ENCODE measurements at regions of chr17 and their contacts with region 1.

Region 1: DNA sequence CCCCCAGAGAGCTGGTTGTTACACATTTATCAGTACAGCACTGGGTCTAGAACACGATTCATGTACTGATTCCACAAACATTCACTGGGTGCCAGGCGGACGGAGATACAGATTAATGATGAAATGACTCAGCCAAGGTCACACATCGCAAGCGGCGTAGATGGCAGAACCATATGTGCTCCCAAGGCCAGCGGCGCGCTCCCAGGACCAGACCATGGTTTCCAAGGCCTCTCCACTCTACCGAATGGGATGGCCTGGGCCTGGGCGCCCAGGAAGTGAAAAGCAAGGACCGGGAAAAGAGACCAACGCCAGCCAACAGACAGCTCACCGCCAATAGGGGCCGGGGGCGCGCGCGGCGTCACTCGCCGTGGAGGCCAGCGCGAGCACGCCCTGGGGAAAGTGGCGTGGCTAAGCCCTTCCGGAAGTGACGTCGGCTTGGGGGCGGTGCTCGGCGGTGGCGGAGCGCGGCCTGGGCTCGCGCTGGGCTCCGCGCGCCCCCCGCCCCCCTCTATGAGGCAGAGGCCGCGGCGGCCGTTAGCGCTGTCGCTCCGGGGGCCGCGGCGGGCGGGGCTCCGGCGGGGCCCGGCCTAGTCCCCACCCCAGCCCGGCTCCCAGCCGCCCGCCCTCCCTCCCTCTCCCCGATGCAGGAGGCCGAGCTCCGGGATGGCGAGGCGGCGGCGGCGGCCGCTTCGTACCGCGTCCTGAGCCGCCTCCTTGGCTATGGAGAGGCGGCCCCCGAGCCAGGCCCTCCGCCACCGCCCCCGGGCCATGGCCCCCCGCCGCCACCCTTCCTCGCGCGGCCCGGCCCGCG is at the start of gene SOCS7:
- DNase-seq: peak; percentile 89
- H3K4me3 ChIP-seq: peak within 1 kb of the TSS; percentile 66 to 69 (median 69)
- H3K27ac ChIP-seq: peak within 1 kb of the TSS; percentile 21
- H3K4me1 ChIP-seq: peaks cover 8% of the 10 kb centered on the region
- H3K27me3 ChIP-seq: no peaks in the 10 kb centered on the region
- CTCF ChIP-seq: no peak
- POLR2A ChIP-seq: peak; percentile 64
- total RNA-seq, gene SOCS7: 10.4 and 11.7 TPM in 2 replicates

Region 2: GRCh38 chr17:38328620-38329019 is 23.0 kb before region 1 on chr17:
- CTCF ChIA-PET with region 1: interaction called, 63 read pairs
- POLR2A ChIA-PET with region 1: interaction called, 3 read pairs
- dilution Hi-C with region 1: no loop called
- intact Hi-C with region 1: no loop called
- DNase-seq: no peak
- H3K4me3 ChIP-seq: no peak overlapping the region
- H3K27ac ChIP-seq: no peak overlapping the region
- H3K4me1 ChIP-seq: peaks cover 5% of the 10 kb centered on the region
- H3K27me3 ChIP-seq: peaks cover 0 to 3% of the 10 kb centered on the region in 2 experiments
- CTCF ChIP-seq: no peak
- POLR2A ChIP-seq: no peak

Region 3: DNA sequence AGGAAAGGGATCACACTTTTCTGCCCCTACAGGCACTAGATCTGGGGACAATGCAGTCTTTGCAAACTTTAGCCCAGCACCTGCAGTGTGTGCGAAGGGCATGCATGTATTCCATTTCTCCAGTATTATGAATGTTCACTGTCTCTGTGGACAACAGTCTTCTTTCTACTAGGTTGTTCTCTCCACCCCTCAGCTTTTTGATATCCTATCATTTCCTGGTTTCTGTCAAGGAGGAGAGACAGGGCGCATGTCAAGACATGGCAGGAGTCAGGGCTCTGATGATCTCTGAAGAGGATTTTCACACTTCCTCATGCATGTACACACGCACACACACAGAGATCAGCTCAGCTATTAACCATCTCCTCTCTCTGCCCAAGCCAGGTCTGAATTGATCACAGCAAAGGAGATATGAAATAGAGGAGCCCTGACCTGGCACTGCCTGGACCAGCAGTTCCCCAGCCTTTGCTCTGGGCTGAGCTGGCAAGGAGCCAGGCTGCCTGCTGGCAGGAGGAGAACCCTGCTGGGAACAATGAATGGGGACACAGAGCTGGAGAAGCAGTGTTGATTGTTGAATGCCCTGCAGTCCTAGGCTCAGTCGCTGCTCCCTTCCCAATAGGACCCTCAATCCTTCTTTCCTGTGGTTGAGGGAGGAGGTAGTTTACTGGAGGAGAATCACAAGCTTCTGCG is 10.4 kb before region 1 on chr17:
- CTCF ChIA-PET with region 1: interaction called, 63 read pairs
- POLR2A ChIA-PET with region 1: interaction called, 3 read pairs
- dilution Hi-C with region 1: no loop called
- intact Hi-C with region 1: no loop called
- DNase-seq: peak; percentile 51
- H3K4me3 ChIP-seq: no peak overlapping the region
- H3K27ac ChIP-seq: no peak overlapping the region
- H3K4me1 ChIP-seq: no peaks in the 10 kb centered on the region
- H3K27me3 ChIP-seq: peaks cover 0 to 3% of the 10 kb centered on the region in 2 experiments
- CTCF ChIP-seq: no peak
- POLR2A ChIP-seq: no peak

Region 4: DNA sequence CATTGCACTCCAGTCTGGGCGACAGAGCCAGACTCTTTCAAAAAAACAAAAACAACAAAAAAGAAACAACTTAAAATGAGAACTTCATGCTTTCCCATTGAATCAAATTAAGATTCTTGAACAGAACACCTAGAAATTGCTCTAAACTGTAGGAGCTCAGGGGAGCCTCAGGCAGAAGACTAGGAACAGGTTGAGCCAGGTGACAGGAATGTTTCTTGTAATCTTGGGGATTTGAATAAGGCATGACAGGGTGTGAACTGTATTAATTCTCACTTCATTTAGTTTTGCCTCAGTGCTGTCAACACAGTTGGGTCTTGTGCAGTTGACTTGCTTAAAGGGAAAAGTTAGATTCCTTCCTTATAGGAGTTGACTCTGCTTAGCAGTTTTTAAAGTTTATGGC is 27.8 kb after region 1 on chr17:
- CTCF ChIA-PET with region 1: interaction called, 24 read pairs
- POLR2A ChIA-PET with region 1: no interaction called
- dilution Hi-C with region 1: no loop called
- intact Hi-C with region 1: no loop called
- DNase-seq: no peak
- H3K4me3 ChIP-seq: no peak overlapping the region
- H3K27ac ChIP-seq: no peak overlapping the region
- H3K4me1 ChIP-seq: no peaks in the 10 kb centered on the region
- H3K27me3 ChIP-seq: no peaks in the 10 kb centered on the region
- CTCF ChIP-seq: no peak
- POLR2A ChIP-seq: no peak

Region 5: GRCh38 chr17:38415250-38416194 is 63.9 kb after region 1 on chr17:
- CTCF ChIA-PET with region 1: interaction called, 365 read pairs
- POLR2A ChIA-PET with region 1: interaction called, 3 read pairs
- dilution Hi-C with region 1: no loop called
- intact Hi-C with region 1: loop called (anchors 1 kb)
- DNase-seq: no peak
- H3K4me3 ChIP-seq: no peak overlapping the region
- H3K27ac ChIP-seq: no peak overlapping the region
- H3K4me1 ChIP-seq: no peaks in the 10 kb centered on the region
- H3K27me3 ChIP-seq: peaks cover 20 to 22% of the 10 kb centered on the region in 2 experiments
- CTCF ChIP-seq: no peak
- POLR2A ChIP-seq: no peak

Region 6: DNA sequence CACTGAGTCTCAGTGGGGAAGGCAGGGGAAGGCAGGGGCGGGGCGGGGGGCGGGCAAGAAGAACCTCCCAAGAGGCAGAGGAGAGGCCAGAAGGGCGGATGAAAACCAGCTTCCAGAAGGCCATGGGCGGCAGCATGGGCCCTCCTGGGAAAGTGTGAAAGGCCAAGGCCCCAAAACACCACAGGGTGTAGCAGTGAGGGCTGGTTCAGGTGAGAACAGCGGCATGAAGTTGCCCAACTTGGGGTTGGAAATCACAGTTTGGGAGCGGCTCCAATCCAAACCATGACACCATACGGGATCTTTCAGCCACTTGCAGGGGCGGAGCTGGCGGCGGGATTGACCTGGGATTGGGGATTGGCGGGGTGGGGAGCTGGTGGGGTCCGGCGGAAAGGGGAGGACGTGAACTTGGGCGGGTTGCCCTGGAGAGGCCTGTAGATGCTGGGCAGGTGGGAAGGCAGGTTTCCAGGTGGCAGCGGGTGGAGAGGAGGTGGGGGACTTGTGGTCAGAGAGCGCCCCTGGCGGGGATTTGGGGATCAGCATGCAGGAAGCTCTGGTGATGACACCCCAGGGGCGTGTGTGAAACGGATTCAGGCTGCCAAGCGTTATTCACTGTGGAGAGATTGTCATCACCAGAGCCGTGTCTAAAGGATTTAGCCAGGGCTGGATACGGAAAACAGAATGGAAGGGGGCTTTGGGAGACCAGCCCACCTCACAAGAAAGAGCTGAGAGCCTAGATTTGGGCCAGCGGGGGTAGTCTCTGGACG is 157.6 kb after region 1 on chr17:
- CTCF ChIA-PET with region 1: interaction called, 12 read pairs
- POLR2A ChIA-PET with region 1: no interaction called
- dilution Hi-C with region 1: no loop called
- intact Hi-C with region 1: no loop called
- DNase-seq: peak; percentile 76
- H3K4me3 ChIP-seq: peak overlapping the region in 2 of 3 experiments; percentile 12 to 13
- H3K27ac ChIP-seq: peak overlapping the region; percentile 10
- H3K4me1 ChIP-seq: peaks cover 13% of the 10 kb centered on the region
- H3K27me3 ChIP-seq: no peaks in the 10 kb centered on the region
- CTCF ChIP-seq: peak; percentile 93 to 95
- POLR2A ChIP-seq: peak; percentile 76

Region 7: DNA sequence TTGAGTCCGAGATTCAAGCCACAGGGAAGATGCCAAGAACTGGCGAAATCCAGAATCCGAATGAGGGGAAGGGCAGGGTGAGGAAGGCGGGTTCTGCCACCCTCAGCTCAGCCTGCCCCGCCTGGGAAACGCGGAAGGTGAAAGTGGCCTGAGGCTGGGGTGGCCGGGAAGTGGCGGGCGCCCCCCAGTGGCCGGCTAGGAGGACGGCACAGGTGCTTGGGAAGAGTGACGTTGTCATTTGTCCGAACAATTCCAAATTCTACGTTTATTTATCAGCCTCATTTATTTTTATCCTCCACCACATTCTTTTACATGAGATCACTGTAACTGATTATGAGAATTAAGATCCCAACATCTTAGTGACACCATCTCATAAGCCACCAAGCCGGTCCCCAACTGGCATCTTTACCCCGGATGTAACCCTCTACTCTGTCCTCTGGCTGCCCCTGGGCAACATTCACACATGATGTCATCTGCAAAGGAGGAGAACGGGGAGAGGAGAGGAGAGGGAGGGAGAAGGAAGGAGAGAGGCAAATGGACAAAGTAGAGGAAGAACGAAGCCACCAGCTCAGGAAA is 232.8 kb after region 1 on chr17:
- CTCF ChIA-PET with region 1: interaction called, 15 read pairs
- POLR2A ChIA-PET with region 1: no interaction called
- dilution Hi-C with region 1: no loop called
- intact Hi-C with region 1: no loop called
- DNase-seq: peak; percentile 28
- H3K4me3 ChIP-seq: no peak overlapping the region
- H3K27ac ChIP-seq: no peak overlapping the region
- H3K4me1 ChIP-seq: no peaks in the 10 kb centered on the region
- H3K27me3 ChIP-seq: peaks cover 24 to 26% of the 10 kb centered on the region in 2 experiments
- CTCF ChIP-seq: peak; percentile 93 to 98
- POLR2A ChIP-seq: no peak

Measured in endothelial cell of umbilical vein (primary cell).